Lower leg skin (tissue), 4 donors: ENCODE measurements at regions of chr17 and their contacts with region 1.

Region 1: DNA sequence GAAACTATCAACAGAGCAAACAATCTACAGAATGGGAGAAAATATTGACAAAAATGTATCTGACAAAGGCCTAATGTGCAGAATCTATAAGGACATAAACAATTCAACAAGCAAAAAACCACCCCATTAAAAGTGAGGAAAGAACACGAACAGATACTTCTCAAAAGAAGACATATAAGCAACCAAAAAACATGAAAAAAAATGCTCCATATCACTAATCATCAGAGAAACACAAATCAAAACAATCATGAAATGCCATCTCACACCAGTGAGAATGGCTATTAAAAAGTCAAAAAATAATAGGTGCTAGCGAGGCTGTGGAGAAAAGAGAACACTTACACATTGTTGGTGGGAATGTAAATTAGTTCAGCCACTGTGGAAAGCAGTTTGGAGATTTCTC is 10.9 kb downstream of the INTS2 start:
- DNase-seq: no peak
- H3K4me3 ChIP-seq: no peak overlapping the region
- CTCF ChIP-seq: no peak
- POLR2A ChIP-seq: no peak

Region 2: GRCh38 chr17:61970019-61970418 is 53.2 kb after region 1 on chr17:
- intact Hi-C with region 1: no loop called
- DNase-seq: no peak
- H3K4me3 ChIP-seq: no peak overlapping the region
- CTCF ChIP-seq: no peak
- POLR2A ChIP-seq: no peak

Region 3: GRCh38 chr17:61997664-61998063 is 80.8 kb after region 1 on chr17:
- intact Hi-C with region 1: no loop called
- DNase-seq: no peak
- H3K4me3 ChIP-seq: no peak overlapping the region
- CTCF ChIP-seq: no peak
- POLR2A ChIP-seq: no peak

Region 4: GRCh38 chr17:62045109-62045905 is 128.5 kb after region 1 on chr17:
- intact Hi-C with region 1: loop called (anchors 10 kb)
- DNase-seq: no peak
- H3K4me3 ChIP-seq: no peak overlapping the region
- CTCF ChIP-seq: no peak
- POLR2A ChIP-seq: no peak